Panc1 (cell line): ENCODE measurements at regions of chr3 and their contacts with region 1.

Region 1: GRCh38 chr3:186570096-186570940 is at the start of gene DNAJB11:
- DNase-seq: peak; percentile 98
- ATAC-seq: peak; percentile 93
- H3K4me3 ChIP-seq: peak within 1 kb of the TSS; percentile 87 to 94
- H3K27ac ChIP-seq: peak within 1 kb of the TSS; percentile 85
- H3K4me1 ChIP-seq: peaks cover 15% of the 10 kb centered on the region
- H3K27me3 ChIP-seq: no peaks in the 10 kb centered on the region
- CTCF ChIP-seq: no peak
- total RNA-seq, gene DNAJB11: 87.9 TPM

Region 2: DNA sequence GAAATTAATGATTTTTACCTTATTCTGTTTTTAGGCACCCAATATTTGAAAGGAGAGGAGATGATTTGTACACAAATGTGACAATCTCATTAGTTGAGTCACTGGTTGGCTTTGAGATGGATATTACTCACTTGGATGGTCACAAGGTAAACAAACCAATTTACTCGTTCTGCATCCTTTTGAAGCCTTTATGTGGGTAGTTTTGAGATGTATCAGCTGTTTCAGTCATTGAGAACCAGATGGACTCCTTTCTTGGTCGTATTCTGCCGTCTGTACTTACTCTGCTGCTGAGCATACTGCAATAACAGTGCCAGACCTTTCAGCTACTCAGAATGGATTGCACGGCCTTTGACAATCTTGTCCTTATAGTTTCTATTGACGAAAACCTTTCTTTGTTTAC is 13.5 kb after region 1 on chr3:
- CTCF ChIA-PET with region 1: no interaction called
- POLR2A ChIA-PET with region 1: interaction called, 10 read pairs
- in situ Hi-C with region 1: no loop called
- intact Hi-C with region 1: no loop called
- DNase-seq: no peak
- ATAC-seq: no peak
- H3K4me3 ChIP-seq: no peak overlapping the region
- H3K27ac ChIP-seq: no peak overlapping the region
- H3K4me1 ChIP-seq: no peaks in the 10 kb centered on the region
- H3K27me3 ChIP-seq: no peaks in the 10 kb centered on the region
- CTCF ChIP-seq: no peak

Region 3: GRCh38 chr3:186783073-186783730 is 212.9 kb after region 1 on chr3 and contains the start of gene EIF4A2:
- CTCF ChIA-PET with region 1: no interaction called
- POLR2A ChIA-PET with region 1: interaction called, 10 read pairs
- in situ Hi-C with region 1: no loop called
- intact Hi-C with region 1: no loop called
- DNase-seq: no peak
- ATAC-seq: peak; percentile 87
- H3K4me3 ChIP-seq: peak within 1 kb of the TSS; percentile 96 to 97
- H3K27ac ChIP-seq: peak within 1 kb of the TSS; percentile 100
- H3K4me1 ChIP-seq: peaks cover 34% of the 10 kb centered on the region
- H3K27me3 ChIP-seq: no peaks in the 10 kb centered on the region
- CTCF ChIP-seq: no peak
- total RNA-seq, gene EIF4A2: 219 TPM